ENCODE measurements at regions of chr11 and their contacts with region 1.

Region 1: GRCh38 chr11:123246749-123247495 is 51.9 kb upstream of the CLMP start:
- DNase-seq: no peak
- H3K4me3 ChIP-seq: no peak overlapping the region
- CTCF ChIP-seq: peak; percentile 91

Region 2: GRCh38 chr11:122853971-122854446 is 392.9 kb before region 1 on chr11:
- CTCF ChIA-PET with region 1: no interaction called
- POLR2A ChIA-PET with region 1: no interaction called
- DNase-seq: peak; percentile 42
- H3K4me3 ChIP-seq: no peak overlapping the region
- CTCF ChIP-seq: peak; percentile 29

Region 3: GRCh38 chr11:123083623-123084029 is 163.3 kb before region 1 on chr11:
- CTCF ChIA-PET with region 1: interaction called, 14 read pairs
- POLR2A ChIA-PET with region 1: no interaction called
- DNase-seq: peak; percentile 82
- H3K4me3 ChIP-seq: no peak overlapping the region
- CTCF ChIP-seq: no peak

Region 4: DNA sequence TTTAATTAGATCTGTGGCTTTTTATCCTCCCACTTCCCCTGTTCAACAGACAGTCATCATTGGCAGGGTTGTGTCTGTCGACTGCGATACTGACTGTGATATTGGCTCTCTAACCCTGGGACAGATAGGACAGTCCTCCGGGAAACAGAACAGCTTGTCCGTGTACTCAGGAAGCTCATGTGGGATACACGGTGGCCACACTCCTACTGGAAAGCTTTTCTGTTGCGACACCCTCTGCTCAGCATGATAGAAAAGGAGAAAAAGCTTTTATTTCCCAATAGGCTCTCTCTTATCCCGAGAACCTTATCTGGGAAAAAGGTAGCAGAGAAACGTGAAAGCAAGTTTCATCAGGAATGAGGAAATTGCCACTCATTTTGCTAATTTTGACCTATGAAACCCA is 124.6 kb before region 1 on chr11:
- CTCF ChIA-PET with region 1: interaction called, 683 read pairs
- POLR2A ChIA-PET with region 1: no interaction called
- DNase-seq: no peak
- H3K4me3 ChIP-seq: no peak overlapping the region
- CTCF ChIP-seq: no peak

Region 5: DNA sequence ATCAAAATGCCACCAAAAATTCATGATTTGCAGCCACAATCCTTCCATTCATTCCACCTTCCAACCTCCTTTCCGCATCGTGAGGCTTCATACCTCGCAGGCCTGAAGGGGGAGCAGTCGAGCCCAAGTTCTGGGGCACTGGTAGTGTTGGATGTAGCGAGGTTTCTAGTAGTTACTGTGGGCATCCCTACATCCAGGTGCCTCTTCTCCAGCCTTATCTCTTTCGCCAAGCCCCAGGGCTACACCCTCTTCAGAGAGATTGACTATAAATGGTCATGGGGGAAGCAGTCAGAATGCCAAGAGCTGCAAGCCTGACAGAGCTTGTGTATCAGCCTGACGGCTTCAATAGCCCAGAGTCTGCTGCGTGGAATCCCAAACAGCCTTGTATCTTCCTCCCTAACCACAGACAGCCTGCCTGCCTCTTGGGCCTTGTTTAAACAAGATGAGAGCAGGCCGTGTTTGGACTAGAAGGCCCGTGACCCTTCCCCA is 80.8 kb before region 1 on chr11:
- CTCF ChIA-PET with region 1: interaction called, 82 read pairs
- POLR2A ChIA-PET with region 1: no interaction called
- DNase-seq: peak; percentile 75
- H3K4me3 ChIP-seq: no peak overlapping the region
- CTCF ChIP-seq: peak; percentile 75

Region 6: DNA sequence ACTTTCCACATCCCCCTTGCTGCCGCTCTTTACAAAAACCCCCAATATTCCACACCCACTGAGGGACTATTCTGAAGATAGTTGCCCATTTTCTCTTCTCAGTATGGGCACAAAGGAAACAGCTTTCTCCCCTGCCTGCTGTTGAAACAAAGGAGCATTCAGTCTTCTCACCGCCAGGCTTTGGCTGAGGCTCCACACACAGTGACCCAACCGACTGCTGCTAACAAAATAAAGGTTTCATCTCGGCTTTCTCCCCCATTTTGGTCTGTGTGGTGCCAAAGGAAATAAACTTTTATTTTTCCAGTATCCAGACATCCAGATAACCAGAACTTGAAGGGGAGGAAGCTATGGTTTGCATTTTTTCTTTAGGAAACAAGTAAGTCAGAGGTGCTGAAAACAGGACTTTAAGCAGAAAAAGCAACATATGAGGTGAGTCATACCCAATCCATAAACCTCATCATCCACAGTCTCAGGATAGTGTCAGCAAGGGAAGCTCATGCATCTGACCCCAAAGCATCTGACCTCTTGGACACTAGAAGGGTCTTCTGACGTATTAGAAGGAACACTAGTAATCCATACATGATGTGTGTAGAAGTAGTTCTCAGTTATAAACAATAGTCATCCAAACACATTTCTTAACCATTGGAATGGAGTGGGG is 58.3 kb before region 1 on chr11:
- CTCF ChIA-PET with region 1: interaction called, 31 read pairs
- POLR2A ChIA-PET with region 1: interaction called, 5 read pairs
- DNase-seq: no peak
- H3K4me3 ChIP-seq: peak overlapping the region; percentile 37
- CTCF ChIP-seq: peak; percentile 11

Region 7: GRCh38 chr11:123219066-123219690 is 27.7 kb before region 1 on chr11:
- CTCF ChIA-PET with region 1: interaction called, 20 read pairs
- POLR2A ChIA-PET with region 1: no interaction called
- DNase-seq: no peak
- H3K4me3 ChIP-seq: no peak overlapping the region
- CTCF ChIP-seq: no peak

Region 8: DNA sequence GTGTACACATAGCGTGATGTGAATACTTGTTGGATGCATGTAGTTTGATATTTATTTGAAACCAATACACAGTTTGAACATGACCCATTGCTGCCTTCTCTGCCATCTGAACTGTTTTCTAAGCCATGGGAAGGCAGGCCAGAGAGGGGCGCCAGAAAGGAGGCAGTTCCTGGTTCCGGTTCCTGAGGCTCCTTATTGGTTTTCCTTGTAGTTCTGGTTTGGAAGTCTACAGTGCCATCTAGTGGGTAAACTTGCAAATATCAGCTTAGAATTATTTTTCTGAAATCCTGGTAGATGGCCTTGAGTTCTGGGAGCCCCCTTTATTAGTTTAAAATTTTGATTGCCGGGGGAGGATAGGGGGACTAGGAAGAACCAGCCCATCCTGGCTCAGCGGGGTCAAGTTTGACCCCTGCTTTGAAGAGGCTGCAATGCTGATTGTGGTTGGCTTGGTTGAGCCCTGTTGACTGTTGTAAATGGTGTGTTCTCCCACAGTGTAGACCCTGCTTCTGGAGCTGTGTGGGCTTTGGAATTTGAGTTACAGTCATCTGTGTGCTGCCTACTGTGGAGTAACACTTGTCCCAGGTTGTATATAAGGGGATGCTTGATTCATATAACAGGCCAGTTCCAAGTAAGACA is 231.5 kb after region 1 on chr11:
- CTCF ChIA-PET with region 1: interaction called, 17 read pairs
- POLR2A ChIA-PET with region 1: no interaction called
- DNase-seq: peak; percentile 41
- H3K4me3 ChIP-seq: no peak overlapping the region
- CTCF ChIP-seq: peak; percentile 53

Region 9: GRCh38 chr11:124012697-124013096 is 765.8 kb after region 1 on chr11 and contains the start of gene OR10G4:
- CTCF ChIA-PET with region 1: no interaction called
- POLR2A ChIA-PET with region 1: no interaction called
- DNase-seq: no peak
- H3K4me3 ChIP-seq: no peak within 1 kb of the TSS
- CTCF ChIP-seq: no peak